Vagina (tissue), 2 donors: ENCODE measurements at regions of chr19 and their contacts with region 1.

Region 1: GRCh38 chr19:35931161-35931873 is 4.9 kb upstream of the LRFN3 start:
- DNase-seq: peak; percentile 99 to 100
- H3K4me3 ChIP-seq: peak overlapping the region; percentile 20 to 23
- H3K27ac ChIP-seq: peak overlapping the region; percentile 72
- H3K4me1 ChIP-seq: peaks cover 17% of the 10 kb centered on the region
- H3K27me3 ChIP-seq: no peaks in the 10 kb centered on the region
- CTCF ChIP-seq: peak; percentile 95 to 99 (median 99)
- POLR2A ChIP-seq: peak in 1 of 2 donors; percentile 65

Region 2: GRCh38 chr19:35716801-35717666 is 214.3 kb before region 1 on chr19:
- intact Hi-C with region 1: loop called (anchors 10 kb)
- DNase-seq: peak in 1 of 2 donors; percentile 95
- H3K4me3 ChIP-seq: peak overlapping the region; percentile 67 to 86
- H3K27ac ChIP-seq: peak overlapping the region; percentile 85
- H3K4me1 ChIP-seq: peaks cover 30% of the 10 kb centered on the region
- H3K27me3 ChIP-seq: no peaks in the 10 kb centered on the region
- CTCF ChIP-seq: peak; percentile 59 to 94 (median 93)
- POLR2A ChIP-seq: peak in 1 of 2 donors; percentile 27

Region 3: DNA sequence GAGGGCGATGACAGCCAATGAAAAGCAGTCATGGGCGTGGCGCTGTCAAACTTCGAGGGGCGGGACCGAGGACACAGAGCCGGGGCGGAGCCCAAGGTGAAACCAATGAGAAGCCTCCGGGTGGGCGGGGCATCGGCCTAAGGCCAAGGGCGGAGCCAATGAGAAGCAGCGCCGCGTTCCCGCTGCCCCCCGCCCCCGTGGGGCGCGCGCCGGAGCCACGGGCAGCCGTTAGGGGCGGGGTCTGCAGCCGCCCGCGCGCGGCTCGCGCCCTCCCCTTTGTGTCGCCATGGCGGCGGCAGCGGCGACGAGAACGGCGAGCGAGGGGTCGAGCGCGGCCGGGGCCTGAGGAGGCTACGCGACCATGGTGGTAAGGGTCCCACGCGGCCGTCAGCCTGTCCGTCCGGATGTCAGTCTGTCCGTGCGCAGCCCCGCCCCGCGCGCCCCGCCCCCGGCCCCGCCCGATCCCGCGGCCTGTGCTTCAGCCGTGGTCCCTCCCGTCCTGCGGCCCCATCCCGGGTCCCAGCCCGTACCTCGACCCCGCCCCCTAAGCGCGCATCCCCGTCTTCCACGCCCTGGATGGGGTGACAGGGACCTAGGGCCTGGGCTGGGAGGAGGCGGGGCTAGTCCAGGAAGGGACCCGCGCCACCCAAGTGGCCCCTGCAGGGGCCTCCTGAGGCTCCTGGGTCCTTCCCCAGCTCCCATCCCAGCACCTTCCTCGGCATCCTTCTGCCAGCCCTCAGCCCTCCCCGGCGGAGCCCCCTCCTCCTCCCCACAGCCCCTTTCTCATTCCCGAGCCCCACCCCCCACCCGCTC is 155.8 kb before region 1 on chr19 and contains the start of gene ARHGAP33:
- intact Hi-C with region 1: loop called (anchors 10 kb)
- DNase-seq: peak in 1 of 2 donors; percentile 93
- H3K4me3 ChIP-seq: peak within 1 kb of the TSS; percentile 57 to 87
- H3K27ac ChIP-seq: peak within 1 kb of the TSS; percentile 46
- H3K4me1 ChIP-seq: peaks cover 20% of the 10 kb centered on the region
- H3K27me3 ChIP-seq: no peaks in the 10 kb centered on the region
- CTCF ChIP-seq: no peak
- POLR2A ChIP-seq: no peak
- total RNA-seq, gene ARHGAP33: 35.4 TPM

Region 4: DNA sequence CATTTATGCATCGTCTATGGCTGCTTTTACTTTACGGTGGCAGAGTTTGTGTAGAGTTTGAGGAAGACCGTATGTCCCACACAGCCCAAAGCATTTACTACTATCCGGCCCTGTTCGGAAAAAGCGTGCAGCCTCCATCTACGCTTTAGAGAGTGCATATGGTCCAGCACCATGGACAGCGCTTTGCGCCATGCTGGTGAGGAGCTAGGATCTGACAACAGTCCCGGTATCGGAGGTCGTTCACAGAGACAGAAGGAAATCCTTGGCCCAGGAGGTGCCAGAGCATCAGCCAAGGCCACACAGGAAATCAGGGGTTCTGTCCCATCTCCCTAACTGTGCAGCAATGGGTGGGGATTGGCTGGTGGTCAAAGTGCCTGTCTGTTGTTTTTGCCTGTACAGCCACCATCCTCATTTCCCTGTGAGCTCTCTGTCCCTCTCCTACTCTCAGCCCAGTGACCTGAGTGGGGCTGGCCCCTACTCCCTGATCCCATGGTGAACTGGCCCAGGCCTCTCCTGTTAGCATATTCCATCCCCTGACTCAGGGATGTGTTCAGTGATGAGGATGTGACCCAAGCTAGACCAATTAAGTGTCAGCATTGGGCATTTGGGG is 102.5 kb before region 1 on chr19:
- intact Hi-C with region 1: no loop called
- DNase-seq: no peak
- H3K4me3 ChIP-seq: no peak overlapping the region
- H3K27ac ChIP-seq: no peak overlapping the region
- H3K4me1 ChIP-seq: no peaks in the 10 kb centered on the region
- H3K27me3 ChIP-seq: no peaks in the 10 kb centered on the region
- CTCF ChIP-seq: no peak
- POLR2A ChIP-seq: no peak

Region 5: GRCh38 chr19:35879770-35880317 is 51.5 kb before region 1 on chr19:
- intact Hi-C with region 1: loop called (anchors 2 kb)
- DNase-seq: no peak
- H3K4me3 ChIP-seq: no peak overlapping the region
- H3K27ac ChIP-seq: no peak overlapping the region
- H3K4me1 ChIP-seq: no peaks in the 10 kb centered on the region
- H3K27me3 ChIP-seq: no peaks in the 10 kb centered on the region
- CTCF ChIP-seq: no peak
- POLR2A ChIP-seq: no peak